ENCODE measurements at regions of chr15 and their contacts with region 1.

Region 1: GRCh38 chr15:64162870-64163658 is at the start of gene PPIB:
- DNase-seq: peak; percentile 97
- ATAC-seq: peak; percentile 93
- H3K4me3 ChIP-seq: peak within 1 kb of the TSS; percentile 92
- H3K27ac ChIP-seq: peak within 1 kb of the TSS; percentile 97
- H3K4me1 ChIP-seq: peaks cover 6% of the 10 kb centered on the region
- H3K27me3 ChIP-seq: no peaks in the 10 kb centered on the region
- CTCF ChIP-seq: peak; percentile 51
- POLR2A ChIP-seq: peak; percentile 98
- RAD21 ChIP-seq: peak; percentile 57
- total RNA-seq, gene PPIB: 1,601 and 1,682 TPM in 2 replicates

Region 2: GRCh38 chr15:64381000-64381752 is 218.1 kb after region 1 on chr15 and contains the start of gene PCLAF:
- CTCF ChIA-PET with region 1: no interaction called
- POLR2A ChIA-PET with region 1: no interaction called
- dilution Hi-C with region 1: no loop called
- in situ Hi-C with region 1: no loop called
- intact Hi-C with region 1: loop called (anchors 1 kb)
- DNase-seq: peak; percentile 94
- ATAC-seq: peak; percentile 99
- H3K4me3 ChIP-seq: peak within 1 kb of the TSS; percentile 71
- H3K27ac ChIP-seq: no peak within 1 kb of the TSS; the same call in 1 of the 2 replicates
- H3K4me1 ChIP-seq: peaks cover 2% of the 10 kb centered on the region
- H3K27me3 ChIP-seq: no peaks in the 10 kb centered on the region
- CTCF ChIP-seq: no peak
- POLR2A ChIP-seq: peak; percentile 82
- RAD21 ChIP-seq: no peak
- total RNA-seq, gene PCLAF: 12.9 and 34.2 TPM in 2 replicates